ENCODE measurements at regions of chr17 and their contacts with region 1.

Region 1: DNA sequence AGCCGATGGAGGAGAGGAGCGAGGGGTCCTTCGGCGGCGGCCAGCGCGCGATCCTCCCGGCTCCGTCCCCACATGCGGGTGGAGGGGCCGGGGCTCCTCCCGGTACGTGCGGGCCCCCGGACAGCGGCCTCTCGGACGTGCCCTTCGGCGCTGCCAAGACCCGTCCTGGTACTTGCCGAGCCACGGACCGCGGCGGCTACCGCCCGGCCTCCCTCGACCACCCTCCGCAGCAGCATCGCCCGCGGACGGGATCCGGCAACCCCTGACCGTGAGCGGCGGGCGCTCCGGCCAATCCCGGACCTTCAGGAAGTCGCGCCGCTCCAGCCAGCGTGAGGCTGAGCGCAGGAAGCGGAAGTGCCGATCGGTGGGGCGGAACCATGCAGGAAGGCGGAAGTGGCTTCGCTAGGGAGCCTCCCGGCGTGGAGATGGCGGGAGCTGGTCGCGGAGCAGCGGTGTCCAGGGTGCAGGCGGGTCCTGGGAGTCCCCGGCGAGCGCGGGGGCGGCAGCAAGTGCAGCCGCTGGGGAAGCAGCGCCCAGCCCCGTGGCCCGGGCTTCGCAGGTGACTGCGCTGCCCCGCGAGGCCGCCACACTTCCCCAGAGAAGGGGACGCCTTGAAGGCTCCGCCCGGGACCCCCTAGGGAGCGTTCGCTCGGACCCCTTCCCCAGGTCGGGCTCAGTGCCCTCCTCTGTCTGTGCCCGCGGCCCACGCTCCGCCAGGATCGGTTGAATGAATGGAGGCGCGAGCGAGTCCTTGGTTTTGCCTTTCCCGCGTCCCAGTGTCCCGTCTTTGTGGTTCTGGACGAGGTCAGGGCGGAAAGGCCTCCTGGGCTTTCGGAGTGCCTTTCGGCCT is at the starts of genes CCDC137 and OXLD1:
- DNase-seq: peak; percentile 97
- H3K4me3 Mint-ChIP-seq: peak within 1 kb of the TSS; percentile 99
- H3K27ac Mint-ChIP-seq: peak within 1 kb of the TSS; percentile 96
- H3K4me1 Mint-ChIP-seq: peaks cover 52% of the 10 kb centered on the region
- H3K27me3 Mint-ChIP-seq: no peaks in the 10 kb centered on the region
- total RNA-seq, gene CCDC137: 30.8 to 32.3 TPM
- total RNA-seq, gene OXLD1: 41.9 to 44.1 TPM

Region 2: DNA sequence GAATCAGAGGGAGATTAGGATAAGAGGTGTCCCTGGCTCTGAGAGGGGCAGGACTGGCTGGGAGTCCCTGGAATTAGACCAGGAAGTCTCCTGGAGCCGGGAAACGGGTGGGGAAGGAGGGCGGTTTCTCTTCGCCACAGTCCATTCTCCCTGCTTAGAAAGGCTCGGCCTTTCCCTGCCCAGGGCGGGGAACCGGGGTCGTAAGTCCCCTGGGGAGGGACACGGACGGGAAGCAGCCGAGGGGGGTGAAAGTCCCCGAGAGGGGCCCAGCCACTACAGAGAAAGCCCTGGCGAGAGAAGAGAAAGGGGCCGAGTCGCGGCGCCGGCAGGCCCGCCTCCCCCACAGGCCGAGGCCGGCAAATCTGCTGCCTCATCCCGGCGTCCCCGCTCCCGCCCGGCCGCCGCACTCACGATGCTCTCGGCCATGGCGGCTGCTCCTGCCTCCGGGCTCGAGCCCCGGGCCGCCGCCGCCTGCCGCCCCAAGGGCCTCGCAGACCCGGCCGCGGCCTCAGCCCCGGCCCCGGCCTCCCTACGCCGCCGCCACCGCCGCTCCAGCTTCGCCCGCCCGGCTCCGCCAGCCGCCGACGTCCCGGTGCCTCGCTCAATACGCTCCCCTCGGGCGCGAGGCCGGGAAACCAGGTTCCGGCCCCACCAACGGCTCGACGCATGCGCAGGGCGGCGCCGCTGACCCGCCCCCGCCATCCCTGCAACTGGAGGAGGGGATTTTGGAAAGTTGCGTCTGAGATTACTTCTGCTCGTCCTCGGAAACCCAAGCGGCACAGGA is 29.9 kb before region 1 on chr17 and contains the starts of genes NPLOC4 and TSPAN10:
- CTCF ChIA-PET with region 1: interaction called, 3 read pairs
- intact Hi-C with region 1: loop called (anchors 2 kb)
- DNase-seq: peak; percentile 85
- H3K4me3 Mint-ChIP-seq: peak within 1 kb of the TSS; percentile 93
- H3K27ac Mint-ChIP-seq: peak within 1 kb of the TSS; percentile 79
- H3K4me1 Mint-ChIP-seq: peaks cover 26% of the 10 kb centered on the region
- H3K27me3 Mint-ChIP-seq: no peaks in the 10 kb centered on the region
- total RNA-seq, gene NPLOC4: 67.0 to 68.6 TPM
- total RNA-seq, gene TSPAN10: 0.12 TPM in 1 of 2 experiments, not detected in the other